ENCODE measurements at regions of chr9 and their contacts with region 1.

Region 1: GRCh38 chr9:105712773-105713172 is 18.4 kb downstream of the TMEM38B start:
- DNase-seq: no peak
- ATAC-seq: no peak
- H3K4me3 ChIP-seq: no peak overlapping the region
- H3K27ac ChIP-seq: no peak overlapping the region
- H3K4me1 ChIP-seq: peaks cover 0 to 14% of the 10 kb centered on the region in 2 experiments; a peak in 1 of 5 replicates
- H3K27me3 ChIP-seq: no peaks in the 10 kb centered on the region
- CTCF ChIP-seq: no peak
- EP300 ChIP-seq: no peak
- POLR2A ChIP-seq: no peak
- RAD21 ChIP-seq: no peak

Region 2: DNA sequence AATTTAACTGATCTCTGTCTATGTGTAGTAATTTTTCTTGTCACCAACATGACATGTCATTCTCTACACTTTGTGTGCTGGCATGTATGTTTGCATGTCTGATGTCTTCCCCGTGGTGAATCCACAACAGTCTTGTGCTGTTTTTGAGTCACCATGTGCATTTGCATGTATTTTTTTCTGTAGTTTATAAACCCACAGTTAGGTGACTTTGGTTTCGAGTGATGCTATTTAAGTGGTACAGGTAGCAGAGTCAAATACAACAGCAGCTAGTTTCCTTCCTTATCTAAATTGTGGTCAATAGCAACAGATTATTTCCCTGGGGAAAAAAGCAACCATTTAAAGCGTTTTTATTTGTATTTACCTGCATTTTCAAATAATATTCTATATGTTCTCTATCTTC is 354.8 kb before region 1 on chr9:
- CTCF ChIA-PET with region 1: no interaction called
- POLR2A ChIA-PET with region 1: no interaction called
- in situ Hi-C with region 1: no loop called
- intact Hi-C with region 1: no loop called
- DNase-seq: no peak
- ATAC-seq: no peak
- H3K4me3 ChIP-seq: no peak overlapping the region
- H3K27ac ChIP-seq: no peak overlapping the region
- H3K4me1 ChIP-seq: no peaks in the 10 kb centered on the region
- H3K27me3 ChIP-seq: no peaks in the 10 kb centered on the region
- CTCF ChIP-seq: no peak
- EP300 ChIP-seq: no peak
- POLR2A ChIP-seq: no peak
- RAD21 ChIP-seq: no peak

Region 3: DNA sequence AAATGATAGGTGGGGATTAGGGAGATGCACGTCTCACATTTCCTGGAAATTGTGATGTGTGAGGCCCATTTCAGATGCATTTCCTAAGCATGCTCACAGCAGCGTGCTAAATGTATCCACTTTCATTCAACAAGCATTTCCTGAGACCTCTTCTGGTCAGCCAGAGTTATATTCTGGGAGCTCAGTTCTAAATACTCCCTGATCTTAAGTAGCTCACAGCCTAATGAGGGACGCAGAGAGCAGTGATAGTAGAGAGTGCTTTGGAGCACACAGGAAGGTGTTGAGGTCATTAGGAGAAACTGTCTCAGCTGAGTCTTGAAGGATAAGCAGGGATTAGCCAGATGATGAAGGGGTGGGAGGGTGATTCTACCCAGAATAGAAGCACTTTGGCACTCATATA is 311.1 kb before region 1 on chr9:
- CTCF ChIA-PET with region 1: no interaction called
- POLR2A ChIA-PET with region 1: no interaction called
- in situ Hi-C with region 1: no loop called
- intact Hi-C with region 1: no loop called
- DNase-seq: no peak
- ATAC-seq: no peak
- H3K4me3 ChIP-seq: no peak overlapping the region
- H3K27ac ChIP-seq: no peak overlapping the region
- H3K4me1 ChIP-seq: no peaks in the 10 kb centered on the region
- H3K27me3 ChIP-seq: peaks cover 24 to 27% of the 10 kb centered on the region in 2 experiments
- CTCF ChIP-seq: peak in 1 of 3 experiments; percentile 10; a peak in 1 of 6 replicates
- EP300 ChIP-seq: no peak
- POLR2A ChIP-seq: no peak
- RAD21 ChIP-seq: peak in 1 of 2 experiments; percentile 20; a peak in 1 of 4 replicates

Region 4: DNA sequence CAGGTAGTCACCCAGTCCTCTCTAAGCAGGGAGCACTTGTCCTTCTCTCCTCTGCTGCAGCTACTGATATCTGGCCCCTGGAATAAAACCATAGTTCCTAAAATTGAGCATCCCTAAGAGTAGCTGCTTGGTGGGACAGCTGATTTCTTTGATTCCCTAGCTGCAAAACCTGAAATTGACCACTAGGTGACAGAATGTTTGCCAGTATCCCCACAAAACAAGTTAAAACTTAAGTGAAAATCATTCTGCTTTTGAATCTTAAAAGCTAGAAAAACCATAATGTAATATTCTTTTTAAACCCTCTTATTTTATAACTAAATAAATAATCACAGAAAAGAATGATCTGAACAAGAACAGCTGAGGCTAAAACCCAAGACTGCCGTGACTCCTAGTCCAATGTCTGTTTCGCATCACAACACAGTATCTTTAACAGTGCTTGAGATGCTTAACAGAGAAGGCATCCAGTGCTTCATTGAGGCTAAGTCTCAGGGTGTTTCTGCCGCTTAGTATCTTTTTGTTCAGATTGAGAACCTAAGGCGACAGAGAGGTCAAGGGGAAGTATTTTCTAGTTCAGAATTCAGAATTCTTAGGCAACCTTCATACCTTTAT is 74.9 kb before region 1 on chr9:
- CTCF ChIA-PET with region 1: no interaction called
- POLR2A ChIA-PET with region 1: interaction called, 4 read pairs
- in situ Hi-C with region 1: no loop called
- intact Hi-C with region 1: loop called (anchors 5 kb)
- DNase-seq: peak in 2 of 4 experiments; percentile 21 to 37
- ATAC-seq: peak; percentile 70
- H3K4me3 ChIP-seq: no peak overlapping the region
- H3K27ac ChIP-seq: no peak overlapping the region
- H3K4me1 ChIP-seq: no peaks in the 10 kb centered on the region
- H3K27me3 ChIP-seq: no peaks in the 10 kb centered on the region
- CTCF ChIP-seq: peak; percentile 45 to 69 (median 62); a peak in 4 of 6 replicates
- EP300 ChIP-seq: no peak
- POLR2A ChIP-seq: no peak
- RAD21 ChIP-seq: peak; percentile 11 to 67; a peak in 2 of 4 replicates

Region 5: GRCh38 chr9:105656131-105656921 is 56.4 kb before region 1 on chr9:
- CTCF ChIA-PET with region 1: no interaction called
- POLR2A ChIA-PET with region 1: interaction called, 4 read pairs
- in situ Hi-C with region 1: no loop called
- intact Hi-C with region 1: loop called (anchors 5 kb)
- DNase-seq: peak; percentile 77 to 83 (median 78)
- ATAC-seq: peak; percentile 97
- H3K4me3 ChIP-seq: peak overlapping the region; percentile 54
- H3K27ac ChIP-seq: peak overlapping the region; percentile 45; the same call in 2 of the 3 replicates
- H3K4me1 ChIP-seq: peaks cover 11 to 13% of the 10 kb centered on the region in 2 experiments; a peak in 4 of 5 replicates
- H3K27me3 ChIP-seq: no peaks in the 10 kb centered on the region
- CTCF ChIP-seq: peak in 2 of 3 experiments; percentile 55 to 71
- EP300 ChIP-seq: no peak
- POLR2A ChIP-seq: peak; percentile 25; the same call in 1 of the 2 replicates
- RAD21 ChIP-seq: peak; percentile 67 to 74

Measured in K562 (cell line).